Activated CD8-positive, alpha-beta T cell treated with anti-CD3 and anti-CD28 coated beads, Interleukin-2, amount 10 ng/mL, durations not matched to agents 7 days and 5 days (primary cell): ENCODE measurements at regions of chr10 and their contacts with region 1.

Region 1: DNA sequence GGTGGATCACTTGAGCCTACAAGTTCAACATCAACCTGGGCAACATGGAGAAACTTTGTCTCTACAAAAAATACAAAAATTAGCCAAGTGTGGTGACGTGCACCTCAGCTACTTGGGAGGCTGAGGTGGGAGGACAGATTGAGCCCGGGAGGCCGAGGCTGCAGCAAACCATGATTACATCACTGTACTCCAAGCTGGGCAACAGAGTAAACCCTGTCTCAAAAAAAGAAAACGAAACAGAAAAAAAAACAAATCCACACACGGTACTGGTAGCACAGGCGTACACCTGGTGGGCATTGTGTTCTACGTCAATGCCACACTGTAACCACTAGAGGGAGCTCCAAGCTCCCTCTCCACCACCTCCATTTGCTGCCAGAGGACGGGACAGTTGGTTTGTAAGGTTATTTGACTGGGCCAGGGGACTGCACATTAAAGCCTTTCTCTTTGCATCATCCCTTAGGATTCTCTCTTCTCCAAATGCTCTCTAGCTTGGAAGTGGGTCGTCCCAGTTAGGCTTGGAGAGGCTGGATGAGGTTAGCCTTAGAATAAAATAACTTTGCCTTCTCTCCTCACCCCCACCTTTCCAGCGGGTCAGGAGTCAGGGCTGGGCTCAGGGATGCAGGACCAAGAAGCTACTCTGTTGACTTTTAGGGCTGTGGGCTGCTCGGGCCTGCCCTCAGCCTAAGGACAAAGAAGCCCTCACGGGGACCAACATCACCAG is 130.8 kb downstream of the SORBS1 start:
- DNase-seq: peak; percentile 57
- ATAC-seq: peak; percentile 82
- H3K4me3 Mint-ChIP-seq: no peak overlapping the region
- H3K27ac Mint-ChIP-seq: no peak overlapping the region
- H3K4me1 Mint-ChIP-seq: no peaks in the 10 kb centered on the region
- H3K27me3 Mint-ChIP-seq: peaks cover 12% of the 10 kb centered on the region

Region 2: DNA sequence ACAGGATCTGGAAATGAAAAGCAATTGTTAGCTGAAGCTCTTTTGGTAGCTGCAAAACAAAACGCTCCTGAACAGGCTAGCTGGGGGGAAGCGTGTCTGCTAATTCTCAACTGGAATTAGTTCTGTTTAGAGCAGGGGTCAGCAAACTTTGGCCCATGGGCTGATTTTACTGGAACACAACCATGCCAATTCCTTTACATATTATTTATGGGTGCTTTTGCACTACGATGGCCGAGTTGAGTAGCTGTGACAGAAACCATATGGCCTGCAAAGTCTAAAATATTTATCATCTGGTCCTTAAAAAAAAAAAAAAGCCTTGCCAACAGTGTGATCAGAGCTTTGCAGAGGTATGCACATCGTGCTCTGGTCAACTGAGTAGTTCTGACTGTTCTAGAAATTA is 31.2 kb before region 1 on chr10:
- CTCF ChIA-PET with region 1: interaction called, 11 read pairs
- POLR2A ChIA-PET with region 1: no interaction called
- DNase-seq: no peak
- ATAC-seq: no peak
- H3K4me3 Mint-ChIP-seq: no peak overlapping the region
- H3K27ac Mint-ChIP-seq: no peak overlapping the region
- H3K4me1 Mint-ChIP-seq: peaks cover 3% of the 10 kb centered on the region
- H3K27me3 Mint-ChIP-seq: peaks cover 2% of the 10 kb centered on the region

Region 3: DNA sequence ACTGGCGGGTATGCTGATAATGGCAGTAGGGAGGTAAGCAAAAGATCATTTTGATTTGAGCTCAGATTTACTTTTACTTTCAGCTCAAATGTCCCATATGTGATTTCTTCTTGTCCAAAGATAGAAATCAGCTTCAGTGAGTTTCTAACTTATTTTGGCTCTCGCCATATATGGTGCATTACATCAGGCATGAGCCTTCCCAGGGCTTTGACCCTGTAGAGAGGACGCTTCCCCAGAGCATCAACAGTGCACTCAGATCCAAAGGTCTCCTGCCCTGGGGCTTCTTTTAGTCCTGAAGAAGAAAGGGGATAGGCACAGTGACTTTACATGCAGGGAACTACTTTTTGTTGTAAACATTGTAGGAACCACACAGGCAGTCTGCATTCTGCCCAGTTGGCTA is 11.0 kb before region 1 on chr10:
- CTCF ChIA-PET with region 1: interaction called, 19 read pairs
- POLR2A ChIA-PET with region 1: no interaction called
- DNase-seq: no peak
- ATAC-seq: no peak
- H3K4me3 Mint-ChIP-seq: no peak overlapping the region
- H3K27ac Mint-ChIP-seq: no peak overlapping the region
- H3K4me1 Mint-ChIP-seq: no peaks in the 10 kb centered on the region
- H3K27me3 Mint-ChIP-seq: peaks cover 5% of the 10 kb centered on the region

Region 4: DNA sequence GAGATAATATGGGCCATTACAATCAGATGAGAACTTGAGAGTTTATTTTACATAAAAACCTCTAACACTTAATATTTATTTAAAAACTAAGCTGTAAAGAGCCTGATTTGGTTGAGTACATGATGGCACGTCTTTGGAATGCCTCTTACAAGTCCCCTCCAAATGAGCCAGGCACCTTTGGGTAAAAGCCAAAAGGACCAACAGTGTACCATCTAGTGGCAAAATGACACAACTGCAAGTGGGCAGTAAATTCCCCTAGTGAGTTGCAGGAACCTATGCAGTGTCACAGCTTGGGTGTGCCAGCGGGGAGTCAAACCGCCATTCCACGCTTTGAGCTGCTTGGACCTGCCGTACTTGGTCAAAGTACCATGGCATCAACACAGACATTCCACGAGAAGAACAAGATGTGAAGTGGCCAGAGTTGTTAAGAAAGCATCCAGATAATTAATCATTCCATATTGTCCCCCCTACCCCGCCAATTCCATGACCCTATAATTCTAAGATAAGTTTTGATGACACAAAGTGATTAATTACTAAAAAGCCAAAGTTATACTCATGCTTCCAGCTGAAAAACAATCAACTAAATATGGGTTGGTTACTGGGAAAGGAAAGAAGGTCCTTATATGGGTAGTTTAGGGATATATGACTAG is 15.6 kb after region 1 on chr10:
- CTCF ChIA-PET with region 1: interaction called, 88 read pairs
- POLR2A ChIA-PET with region 1: no interaction called
- DNase-seq: peak; percentile 49
- ATAC-seq: peak; percentile 70
- H3K4me3 Mint-ChIP-seq: no peak overlapping the region
- H3K27ac Mint-ChIP-seq: no peak overlapping the region
- H3K4me1 Mint-ChIP-seq: peaks cover 7% of the 10 kb centered on the region
- H3K27me3 Mint-ChIP-seq: peaks cover 33% of the 10 kb centered on the region

Region 5: GRCh38 chr10:95601116-95601719 is 170.8 kb after region 1 on chr10:
- CTCF ChIA-PET with region 1: interaction called, 34 read pairs
- POLR2A ChIA-PET with region 1: no interaction called
- DNase-seq: peak; percentile 57
- ATAC-seq: peak; percentile 69
- H3K4me3 Mint-ChIP-seq: no peak overlapping the region
- H3K27ac Mint-ChIP-seq: no peak overlapping the region
- H3K4me1 Mint-ChIP-seq: no peaks in the 10 kb centered on the region
- H3K27me3 Mint-ChIP-seq: peaks cover 12% of the 10 kb centered on the region